ENCODE measurements at regions of chr22 and their contacts with region 1.

Region 1: GRCh38 chr22:18077639-18078328 is at the start of gene PEX26:
- DNase-seq: peak; percentile 93
- H3K4me3 ChIP-seq: peak within 1 kb of the TSS; percentile 98
- H3K4me3 Mint-ChIP-seq: peak within 1 kb of the TSS; percentile 99
- H3K27ac Mint-ChIP-seq: peak within 1 kb of the TSS; percentile 95
- H3K4me1 ChIP-seq: peaks cover 16% of the 10 kb centered on the region
- H3K4me1 Mint-ChIP-seq: peaks cover 24% of the 10 kb centered on the region
- H3K27me3 ChIP-seq: no peaks in the 10 kb centered on the region
- H3K27me3 Mint-ChIP-seq: no peaks in the 10 kb centered on the region
- CTCF ChIP-seq: no peak
- total RNA-seq, gene PEX26: 37.9 and 40.6 TPM in 2 replicates

Region 2: GRCh38 chr22:17554814-17555213 is 523.0 kb before region 1 on chr22:
- CTCF ChIA-PET with region 1: interaction called, 4 read pairs
- POLR2A ChIA-PET with region 1: no interaction called
- intact Hi-C with region 1: loop called (anchors 5 kb)
- DNase-seq: no peak
- H3K4me3 ChIP-seq: no peak overlapping the region
- H3K4me3 Mint-ChIP-seq: no peak overlapping the region
- H3K27ac Mint-ChIP-seq: no peak overlapping the region
- H3K4me1 ChIP-seq: no peaks in the 10 kb centered on the region
- H3K4me1 Mint-ChIP-seq: no peaks in the 10 kb centered on the region
- H3K27me3 ChIP-seq: no peaks in the 10 kb centered on the region
- H3K27me3 Mint-ChIP-seq: no peaks in the 10 kb centered on the region
- CTCF ChIP-seq: no peak

Region 3: GRCh38 chr22:17830043-17830961 is 247.5 kb before region 1 on chr22:
- CTCF ChIA-PET with region 1: interaction called, 23 read pairs
- POLR2A ChIA-PET with region 1: interaction called, 5 read pairs
- intact Hi-C with region 1: loop called (anchors 1 kb)
- DNase-seq: peak; percentile 81 to 89
- H3K4me3 ChIP-seq: no peak overlapping the region
- H3K4me3 Mint-ChIP-seq: no peak overlapping the region
- H3K27ac Mint-ChIP-seq: no peak overlapping the region
- H3K4me1 ChIP-seq: no peaks in the 10 kb centered on the region
- H3K4me1 Mint-ChIP-seq: no peaks in the 10 kb centered on the region
- H3K27me3 ChIP-seq: no peaks in the 10 kb centered on the region
- H3K27me3 Mint-ChIP-seq: no peaks in the 10 kb centered on the region
- CTCF ChIP-seq: peak; percentile 97 to 98

Region 4: DNA sequence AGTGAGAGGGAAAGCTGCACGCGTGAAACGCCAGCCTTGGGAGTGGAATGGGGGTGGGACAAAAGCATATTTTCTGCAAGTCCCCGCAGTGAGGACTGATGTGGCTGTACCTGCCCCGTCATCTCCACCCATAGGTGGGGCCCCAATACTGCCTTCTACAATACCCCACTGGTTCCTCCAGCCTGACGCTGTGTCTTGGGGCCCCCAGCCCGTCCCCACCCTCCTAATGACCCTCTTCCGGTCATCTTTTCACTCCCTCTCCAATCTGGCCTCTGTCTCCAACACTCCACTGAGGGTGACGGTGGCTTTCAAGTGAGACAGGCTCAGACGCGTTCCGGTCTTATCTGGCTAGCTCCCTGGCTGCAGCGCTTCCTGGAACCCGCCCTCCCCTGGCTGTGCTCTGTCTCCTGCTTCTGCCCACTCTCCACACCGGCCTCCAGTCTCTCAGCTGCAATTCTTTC is 157.6 kb before region 1 on chr22:
- CTCF ChIA-PET with region 1: interaction called, 11 read pairs
- POLR2A ChIA-PET with region 1: no interaction called
- intact Hi-C with region 1: loop called (anchors 5 kb)
- DNase-seq: peak; percentile 77 to 89
- H3K4me3 ChIP-seq: peak overlapping the region; percentile 19
- H3K4me3 Mint-ChIP-seq: peak overlapping the region; percentile 65
- H3K27ac Mint-ChIP-seq: peak overlapping the region; percentile 74
- H3K4me1 ChIP-seq: peaks cover 49% of the 10 kb centered on the region
- H3K4me1 Mint-ChIP-seq: peaks cover 30% of the 10 kb centered on the region
- H3K27me3 ChIP-seq: no peaks in the 10 kb centered on the region
- H3K27me3 Mint-ChIP-seq: no peaks in the 10 kb centered on the region
- CTCF ChIP-seq: peak in 1 of 2 experiments; percentile 32

Region 5: GRCh38 chr22:18024276-18024947 is 53.4 kb before region 1 on chr22 and contains the start of gene MICAL3:
- CTCF ChIA-PET with region 1: interaction called, 9 read pairs
- POLR2A ChIA-PET with region 1: no interaction called
- intact Hi-C with region 1: loop called (anchors 5 kb)
- DNase-seq: peak; percentile 44 to 83
- H3K4me3 ChIP-seq: peak within 1 kb of the TSS; percentile 55
- H3K4me3 Mint-ChIP-seq: peak within 1 kb of the TSS; percentile 76
- H3K27ac Mint-ChIP-seq: peak within 1 kb of the TSS; percentile 21
- H3K4me1 ChIP-seq: peaks cover 3% of the 10 kb centered on the region; the same call in 1 of the 2 replicates
- H3K4me1 Mint-ChIP-seq: peaks cover 6% of the 10 kb centered on the region
- H3K27me3 ChIP-seq: no peaks in the 10 kb centered on the region
- H3K27me3 Mint-ChIP-seq: peaks cover 2% of the 10 kb centered on the region
- CTCF ChIP-seq: peak; percentile 39 to 67
- total RNA-seq, gene MICAL3: 65.6 and 74.0 TPM in 2 replicates

Measured in Caco-2 (cell line).